AG04449 (cell line): ENCODE measurements at regions of chr11 and their contacts with region 1.

Region 1: GRCh38 chr11:72189461-72190275 is 2.3 kb upstream of the FOLR1 start:
- DNase-seq: no peak
- H3K4me3 ChIP-seq: no peak overlapping the region
- CTCF ChIP-seq: no peak

Region 2: GRCh38 chr11:72160319-72160718 is 29.3 kb before region 1 on chr11:
- CTCF ChIA-PET with region 1: interaction called, 24 read pairs
- POLR2A ChIA-PET with region 1: no interaction called
- DNase-seq: no peak
- H3K4me3 ChIP-seq: no peak overlapping the region
- CTCF ChIP-seq: no peak

Region 3: GRCh38 chr11:72174299-72175070 is 15.2 kb before region 1 on chr11:
- CTCF ChIA-PET with region 1: interaction called, 10 read pairs
- POLR2A ChIA-PET with region 1: no interaction called
- DNase-seq: no peak
- H3K4me3 ChIP-seq: no peak overlapping the region
- CTCF ChIP-seq: no peak

Region 4: DNA sequence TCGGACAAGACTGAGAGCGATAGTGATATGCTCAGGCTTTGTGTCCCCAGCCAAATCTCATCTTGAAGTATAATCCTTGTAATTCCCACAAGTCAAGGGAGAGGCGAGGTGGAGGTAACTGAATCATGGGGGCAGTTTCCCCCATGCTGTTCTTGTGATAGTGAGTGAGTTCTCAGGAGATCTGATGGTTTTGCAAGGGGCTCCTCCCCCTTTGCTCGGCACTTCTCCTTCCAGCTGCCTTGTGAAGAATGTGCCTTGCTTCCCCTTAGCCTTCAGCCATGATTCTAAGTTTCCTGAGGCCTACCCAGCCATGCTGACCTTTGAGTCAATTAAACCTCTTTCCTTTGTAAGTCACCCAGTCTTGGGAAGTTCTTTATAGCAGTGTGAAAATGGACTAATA is 19.4 kb after region 1 on chr11:
- CTCF ChIA-PET with region 1: interaction called, 33 read pairs
- POLR2A ChIA-PET with region 1: no interaction called
- DNase-seq: no peak
- H3K4me3 ChIP-seq: no peak overlapping the region
- CTCF ChIP-seq: no peak

Region 5: DNA sequence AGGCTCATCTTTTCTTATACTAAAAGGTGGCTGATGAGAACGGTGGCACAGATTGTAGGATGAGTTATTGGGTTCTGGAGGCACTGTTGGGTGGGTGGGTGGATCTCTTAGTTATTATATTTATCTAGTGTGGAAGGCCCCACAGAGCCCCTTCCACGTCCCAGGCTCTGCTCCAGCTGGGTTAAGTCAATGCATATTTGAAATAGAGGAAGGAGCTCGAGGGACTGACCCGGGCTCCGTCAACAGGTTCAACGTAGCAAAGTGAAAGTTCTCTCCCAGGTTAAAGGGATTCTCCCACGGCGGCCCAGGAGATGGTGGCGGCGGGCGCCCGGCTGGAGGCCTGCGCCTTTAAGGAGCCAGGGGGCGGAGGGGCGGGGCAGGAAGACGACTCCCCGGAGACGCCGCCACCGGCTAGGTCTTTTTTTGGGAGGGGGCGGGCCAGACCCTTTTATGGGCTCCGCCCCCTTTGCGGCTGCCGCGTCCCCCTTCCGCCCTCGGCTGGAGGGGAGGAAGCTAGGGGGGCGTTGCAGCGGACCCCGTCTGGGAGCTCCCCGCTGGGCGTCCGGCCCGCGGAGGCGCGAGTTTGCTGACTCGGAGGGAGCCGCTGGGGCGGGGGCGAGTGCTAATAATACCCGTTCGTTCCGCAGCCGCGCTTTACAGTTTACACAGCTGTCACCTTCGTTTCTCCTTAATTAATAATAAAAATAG is 33.4 kb after region 1 on chr11:
- CTCF ChIA-PET with region 1: interaction called, 15 read pairs
- POLR2A ChIA-PET with region 1: no interaction called
- DNase-seq: no peak
- H3K4me3 ChIP-seq: peak overlapping the region; percentile 91
- CTCF ChIP-seq: peak; percentile 35